ENCODE measurements at regions of chr12 and their contacts with region 1.

Region 1: DNA sequence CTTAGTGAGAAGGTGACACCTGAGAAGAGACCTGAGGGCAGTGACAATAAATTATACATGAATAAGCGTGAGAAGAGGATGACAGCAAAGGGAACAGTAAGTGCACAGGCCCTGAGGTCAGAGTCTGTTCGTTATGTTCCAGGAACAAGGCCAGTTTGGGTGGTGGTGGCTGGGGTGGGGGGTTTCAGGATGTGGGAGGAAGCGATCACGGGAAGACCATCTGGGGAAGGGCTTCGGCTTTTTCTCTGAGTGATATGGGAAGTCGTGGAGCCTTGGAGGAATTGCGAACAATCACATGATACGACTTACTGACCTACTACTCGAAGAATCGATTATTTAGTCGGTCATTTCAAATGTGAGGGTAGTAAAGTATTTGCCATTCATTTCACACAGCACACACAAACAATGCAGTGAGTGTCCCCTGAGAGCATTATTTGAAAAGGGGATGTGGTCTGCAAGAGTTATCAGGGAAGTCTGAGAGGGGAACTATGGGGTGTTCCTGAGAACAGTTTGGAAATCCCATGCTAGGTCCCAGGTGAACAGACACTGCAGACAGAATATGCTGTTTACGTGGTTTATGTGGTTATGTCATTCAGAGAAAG is 94.7 kb downstream of the SLC38A1 start:
- DNase-seq: no peak
- ATAC-seq: peak; percentile 69
- H3K4me3 Mint-ChIP-seq: peak overlapping the region; percentile 71
- H3K27ac Mint-ChIP-seq: peak overlapping the region; percentile 88
- H3K4me1 Mint-ChIP-seq: peaks cover 71% of the 10 kb centered on the region
- H3K27me3 Mint-ChIP-seq: no peaks in the 10 kb centered on the region
- CTCF ChIP-seq: no peak

Region 2: DNA sequence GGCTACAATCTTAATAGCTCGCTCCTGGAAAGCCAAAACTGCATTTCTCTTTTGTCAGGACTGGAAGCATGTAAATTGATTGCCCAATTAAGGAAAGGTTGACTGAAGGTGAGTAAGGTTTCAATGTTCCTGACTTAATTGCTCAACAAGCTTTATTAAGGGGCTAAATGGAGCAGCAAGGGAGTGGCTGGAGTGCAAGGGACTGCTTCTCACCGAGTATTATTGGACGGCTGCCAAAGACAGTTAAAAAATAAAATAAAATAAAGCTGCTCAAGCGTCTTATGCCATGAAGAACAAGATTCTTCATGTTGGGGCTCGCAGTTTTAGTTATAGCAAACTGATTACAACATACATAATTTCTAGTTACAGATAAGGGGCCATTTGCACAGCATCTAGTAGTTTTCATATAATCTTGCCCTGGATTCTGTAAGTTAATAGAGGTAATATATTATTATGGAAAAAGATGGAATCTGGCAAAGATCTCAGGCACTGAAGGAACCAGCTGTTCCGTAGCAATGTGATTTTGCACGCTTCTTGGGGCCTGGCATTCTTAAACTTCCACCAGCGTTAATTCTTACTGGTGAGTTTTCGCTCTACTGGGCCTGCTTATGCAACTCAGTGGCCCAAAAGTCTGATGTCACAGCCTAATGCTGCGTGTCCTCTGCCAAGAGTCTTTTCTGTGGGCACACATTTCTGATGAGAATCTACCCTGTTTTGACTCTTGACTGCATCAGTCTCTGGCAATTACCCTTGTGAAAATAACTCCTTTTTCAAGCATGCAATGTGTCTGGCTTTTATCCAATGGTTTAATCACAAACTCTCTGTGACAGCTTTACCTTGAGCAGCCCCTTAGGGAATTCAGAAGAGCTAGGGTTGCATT is 13.8 kb before region 1 on chr12:
- CTCF ChIA-PET with region 1: interaction called, 3 read pairs
- POLR2A ChIA-PET with region 1: interaction called, 3 read pairs
- intact Hi-C with region 1: loop called (anchors 2 kb)
- DNase-seq: no peak
- ATAC-seq: peak; percentile 50
- H3K4me3 Mint-ChIP-seq: no peak overlapping the region
- H3K27ac Mint-ChIP-seq: peak overlapping the region; percentile 5
- H3K4me1 Mint-ChIP-seq: peaks cover 27% of the 10 kb centered on the region
- H3K27me3 Mint-ChIP-seq: no peaks in the 10 kb centered on the region
- CTCF ChIP-seq: no peak

Region 3: GRCh38 chr12:46246021-46246700 is 72.0 kb after region 1 on chr12:
- CTCF ChIA-PET with region 1: no interaction called
- POLR2A ChIA-PET with region 1: no interaction called
- intact Hi-C with region 1: no loop called
- DNase-seq: no peak
- ATAC-seq: no peak
- H3K4me3 Mint-ChIP-seq: peak overlapping the region; percentile 46
- H3K27ac Mint-ChIP-seq: peak overlapping the region; percentile 61
- H3K4me1 Mint-ChIP-seq: peaks cover 90% of the 10 kb centered on the region
- H3K27me3 Mint-ChIP-seq: no peaks in the 10 kb centered on the region
- CTCF ChIP-seq: no peak